ENCODE measurements at regions of chr18 and their contacts with region 1.

Region 1: GRCh38 chr18:24488824-24489493 is 28.5 kb downstream of the HRH4 start:
- DNase-seq: no peak
- ATAC-seq: peak; percentile 54

Region 2: DNA sequence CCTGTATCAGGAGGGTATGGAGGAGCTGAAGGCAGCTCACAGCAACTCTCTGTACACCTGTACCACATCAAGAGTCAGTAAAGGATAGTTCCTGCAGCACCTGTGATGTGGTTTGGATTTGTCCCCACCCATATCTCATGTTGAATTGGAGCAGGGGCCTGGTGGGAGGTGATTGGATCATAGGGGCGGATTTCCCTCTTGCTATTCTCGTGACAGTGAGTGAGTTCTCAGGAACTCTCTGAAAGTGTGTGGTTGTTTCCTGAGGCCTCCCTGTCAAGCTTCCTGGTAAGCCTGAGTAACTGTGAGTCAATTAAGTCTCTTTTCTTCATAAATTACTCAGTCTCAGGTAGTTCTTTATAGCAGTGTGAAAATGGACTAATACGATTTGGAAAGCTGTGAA is 120.2 kb before region 1 on chr18:
- intact Hi-C with region 1: loop called (anchors 10 kb)
- DNase-seq: no peak
- ATAC-seq: no peak

Region 3: DNA sequence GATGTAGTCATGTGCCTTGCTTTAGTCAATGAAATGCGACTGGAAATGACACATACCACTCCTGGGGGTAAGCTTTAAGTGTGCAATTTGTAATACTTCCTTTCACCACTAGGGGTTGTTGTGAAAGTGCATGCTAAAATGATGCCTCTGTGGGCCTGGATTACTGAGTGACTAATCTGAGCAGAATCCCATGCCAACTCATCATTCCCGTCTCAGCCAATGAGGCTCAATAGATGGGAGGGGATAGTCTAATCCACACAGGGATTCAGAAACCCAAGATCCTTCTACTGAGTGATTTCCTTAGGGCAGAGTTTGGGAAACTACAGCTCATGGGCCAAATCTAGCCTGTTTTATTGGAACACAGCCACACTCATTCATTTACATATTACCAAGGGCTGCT is 25.5 kb after region 1 on chr18:
- intact Hi-C with region 1: no loop called
- DNase-seq: no peak
- ATAC-seq: no peak

Region 4: DNA sequence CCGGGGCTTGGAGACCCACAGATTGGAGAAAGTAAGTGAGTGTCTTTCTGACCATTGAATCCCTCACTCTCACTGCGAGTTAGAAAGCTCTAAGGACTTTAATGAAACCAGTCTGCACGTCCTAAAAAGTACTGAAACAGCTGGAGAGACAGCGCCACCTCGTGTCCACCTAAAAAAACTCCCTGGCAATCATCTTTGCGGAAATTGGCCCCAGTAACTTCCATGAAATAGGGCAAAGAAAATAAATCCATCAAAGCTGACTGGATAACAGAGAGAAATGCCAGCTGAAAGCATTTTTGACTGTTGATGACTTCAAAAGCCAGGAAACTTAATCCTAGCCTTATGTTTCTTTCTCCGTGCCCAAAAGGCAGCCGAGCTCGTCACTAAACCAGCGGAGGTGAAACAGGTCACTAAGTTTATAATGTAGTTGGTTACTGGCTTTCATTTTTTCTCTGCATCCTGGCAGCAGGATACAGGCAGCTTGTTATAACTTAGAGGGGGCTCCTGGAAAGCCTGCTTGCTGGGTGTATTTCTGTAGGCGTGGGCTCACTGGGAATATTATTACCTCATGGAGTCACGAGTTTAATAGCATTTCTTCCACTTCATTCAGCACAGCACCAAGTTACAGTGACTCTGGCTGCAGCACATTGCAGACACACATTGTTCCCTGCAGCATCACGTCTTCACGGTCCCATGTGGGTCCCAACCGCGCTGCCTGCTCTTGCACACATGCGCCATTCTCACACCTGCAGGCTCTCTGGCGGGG is 238.0 kb after region 1 on chr18:
- intact Hi-C with region 1: loop called (anchors 10 kb)
- DNase-seq: peak; percentile 86
- ATAC-seq: peak; percentile 87